Heart left ventricle (tissue), 16 donors: ENCODE measurements at regions of chr15 and their contacts with region 1.

Region 1: GRCh38 chr15:82571722-82572222 is 31.5 kb upstream of the RPS17 start:
- DNase-seq: peak; percentile 52 to 73 (median 66)
- ATAC-seq: peak; percentile 65 to 95 (median 90)
- H3K4me3 ChIP-seq: peak overlapping the region; percentile 11 to 60 (median 46)
- H3K27ac ChIP-seq: peak overlapping the region in 6 of 12 donors; percentile 9 to 70 (median 48)
- H3K4me1 ChIP-seq: peaks cover 0 to 12% (median 4%) of the 10 kb centered on the region in 12 donors
- H3K27me3 ChIP-seq: peaks cover 0 to 2% (median 0%) of the 10 kb centered on the region in 9 donors
- CTCF ChIP-seq: no peak
- POLR2A ChIP-seq: peak in 1 of 2 donors; percentile 18

Region 2: DNA sequence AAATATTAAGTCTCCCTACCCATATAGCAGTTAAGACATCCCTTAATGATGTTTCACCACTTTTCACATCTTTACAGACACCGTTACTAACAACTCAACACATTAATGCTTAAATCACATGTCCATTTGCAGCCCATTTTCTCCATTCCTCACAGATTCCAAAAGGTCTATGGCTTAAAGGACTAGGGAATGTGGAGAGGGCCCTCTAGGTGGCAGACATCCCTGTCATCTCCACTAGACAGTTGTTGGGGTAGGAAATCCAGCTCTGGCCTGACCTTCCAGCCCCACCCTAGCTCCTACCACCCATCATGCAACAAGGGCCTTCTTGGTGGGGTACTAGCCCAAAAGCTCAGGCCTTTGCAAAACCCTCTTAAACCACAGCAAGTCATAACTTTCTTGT is 50.2 kb after region 1 on chr15:
- intact Hi-C with region 1: loop called in 1 of 10 experiments (anchors 5 kb)
- DNase-seq: no peak
- ATAC-seq: no peak
- H3K4me3 ChIP-seq: no peak overlapping the region
- H3K27ac ChIP-seq: no peak overlapping the region
- H3K4me1 ChIP-seq: no peaks in the 10 kb centered on the region
- H3K27me3 ChIP-seq: peaks cover 0 to 4% (median 0%) of the 10 kb centered on the region in 9 donors
- CTCF ChIP-seq: no peak
- POLR2A ChIP-seq: no peak

Region 3: DNA sequence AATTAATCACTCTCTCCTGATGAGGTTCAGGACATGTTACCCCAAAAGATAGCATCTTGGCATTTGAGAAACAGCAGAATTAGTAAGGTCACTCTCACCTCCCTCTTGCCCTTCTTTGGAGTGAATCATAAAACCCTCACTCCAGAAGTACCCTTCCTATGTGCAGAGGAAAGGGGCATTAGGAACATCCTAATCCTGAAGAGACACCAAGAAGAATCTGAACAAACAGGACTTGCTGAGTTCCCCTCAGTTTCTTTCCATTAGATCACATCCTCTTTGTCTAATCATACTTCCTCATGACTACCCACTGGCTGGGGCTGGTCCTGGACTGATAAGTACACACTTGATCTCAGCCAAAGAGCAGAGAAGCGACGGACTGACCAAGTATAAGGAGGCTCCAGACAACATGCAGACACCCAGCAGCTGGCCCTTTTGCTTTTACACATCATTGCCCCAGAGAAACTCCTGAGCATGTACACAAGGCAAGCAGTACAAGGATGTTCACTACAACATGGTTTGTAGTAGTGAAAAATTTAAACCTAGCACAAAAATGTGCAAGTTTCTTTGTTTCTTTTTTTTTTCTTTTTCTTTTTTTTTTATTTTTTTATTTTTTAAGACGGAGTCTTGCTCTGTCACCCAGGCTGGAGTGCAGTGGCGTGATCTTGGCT is 520.7 kb after region 1 on chr15:
- intact Hi-C with region 1: no loop called
- DNase-seq: peak in 3 of 5 donors; percentile 46 to 66 (median 46)
- ATAC-seq: peak; percentile 26 to 91 (median 86)
- H3K4me3 ChIP-seq: no peak overlapping the region
- H3K27ac ChIP-seq: peak overlapping the region in 2 of 12 donors; percentile 37 to 73
- H3K4me1 ChIP-seq: peaks cover 0 to 18% (median 0%) of the 10 kb centered on the region in 12 donors
- H3K27me3 ChIP-seq: no peaks in the 10 kb centered on the region
- CTCF ChIP-seq: no peak
- POLR2A ChIP-seq: peak in 1 of 2 donors; percentile 41